ENCODE measurements at regions of chr12 and their contacts with region 1.

Region 1: DNA sequence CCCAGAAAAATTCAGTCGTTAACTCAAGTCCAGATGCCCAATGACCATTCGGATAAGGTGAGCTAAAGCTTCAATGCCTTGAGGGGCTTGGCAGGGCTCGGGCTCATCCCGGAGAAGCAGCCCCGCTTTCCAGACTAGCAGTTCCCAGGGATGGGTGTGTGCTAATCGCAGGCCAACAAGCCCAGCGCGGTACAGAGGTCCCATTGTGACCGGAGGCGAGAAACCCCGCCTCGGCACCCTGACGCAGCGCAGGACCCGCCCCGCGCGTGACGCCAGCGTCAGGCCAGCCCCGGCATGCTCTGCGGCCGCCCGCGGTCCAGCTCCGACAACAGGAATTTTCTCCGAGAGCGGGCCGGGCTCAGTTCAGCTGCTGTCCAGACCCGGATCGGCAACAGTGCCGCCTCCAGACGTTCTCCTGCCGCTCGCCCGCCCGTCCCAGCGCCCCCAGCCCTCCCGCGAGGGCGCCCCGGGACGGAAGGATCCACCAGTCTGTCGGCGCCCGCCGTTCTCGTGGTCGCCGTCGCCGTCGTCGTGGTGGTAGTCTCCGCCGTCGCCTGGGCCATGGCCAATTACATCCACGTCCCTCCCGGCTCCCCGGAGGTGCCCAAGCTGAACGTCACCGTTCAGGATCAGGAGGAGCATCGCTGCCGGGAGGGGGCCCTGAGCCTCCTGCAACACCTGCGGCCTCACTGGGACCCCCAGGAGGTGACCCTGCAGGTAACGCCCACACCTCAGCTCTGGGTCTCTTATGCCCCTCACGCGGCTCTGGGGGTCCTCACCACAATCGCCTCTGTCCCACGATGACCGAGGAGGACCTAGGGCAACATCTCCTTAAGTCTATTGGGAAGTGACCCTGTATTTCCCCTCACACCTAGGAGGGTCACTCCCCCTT is at the start of gene ETNK1:
- DNase-seq: peak; percentile 89
- ATAC-seq: peak; percentile 98
- H3K4me3 Mint-ChIP-seq: peak within 1 kb of the TSS; percentile 100
- H3K27ac Mint-ChIP-seq: peak within 1 kb of the TSS; percentile 94
- H3K4me1 Mint-ChIP-seq: peaks cover 33% of the 10 kb centered on the region
- H3K27me3 Mint-ChIP-seq: peaks cover 4% of the 10 kb centered on the region
- CTCF ChIP-seq: no peak
- total RNA-seq, gene ETNK1: 54.9 to 55.2 TPM

Region 2: DNA sequence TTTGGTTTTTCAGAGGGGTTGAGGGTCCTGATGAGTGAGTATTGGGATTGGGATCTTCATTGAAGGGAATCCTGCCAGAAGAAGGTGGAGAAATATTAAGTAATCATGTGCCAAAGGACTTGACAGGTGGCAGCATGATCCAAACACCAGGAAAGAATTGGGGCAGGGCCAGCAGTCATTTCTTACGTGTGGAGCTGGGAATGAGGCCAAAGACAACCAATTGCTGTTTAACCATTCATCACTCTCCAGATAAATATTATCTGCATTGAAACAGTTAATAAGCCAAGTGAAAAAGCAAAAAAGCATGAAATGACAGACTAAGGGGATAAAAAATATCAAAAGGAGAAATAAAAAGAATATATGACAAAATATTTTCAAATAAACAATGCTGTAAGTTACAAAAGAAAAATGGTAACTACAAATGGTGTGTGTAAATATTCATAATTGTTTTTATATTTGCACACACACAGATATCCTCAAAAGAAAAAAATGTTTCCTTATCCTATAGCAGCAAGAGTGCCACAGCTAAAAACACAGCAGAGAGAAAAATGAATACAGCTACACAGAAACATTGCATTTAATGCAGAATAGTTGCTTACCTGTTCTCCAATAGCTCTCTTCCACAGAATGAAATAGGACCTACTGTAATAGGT is 106.9 kb before region 1 on chr12:
- CTCF ChIA-PET with region 1: no interaction called
- POLR2A ChIA-PET with region 1: no interaction called
- intact Hi-C with region 1: loop called (anchors 2 kb)
- DNase-seq: no peak
- ATAC-seq: no peak
- H3K4me3 Mint-ChIP-seq: no peak overlapping the region
- H3K27ac Mint-ChIP-seq: no peak overlapping the region
- H3K4me1 Mint-ChIP-seq: no peaks in the 10 kb centered on the region
- H3K27me3 Mint-ChIP-seq: no peaks in the 10 kb centered on the region
- CTCF ChIP-seq: no peak

Region 3: DNA sequence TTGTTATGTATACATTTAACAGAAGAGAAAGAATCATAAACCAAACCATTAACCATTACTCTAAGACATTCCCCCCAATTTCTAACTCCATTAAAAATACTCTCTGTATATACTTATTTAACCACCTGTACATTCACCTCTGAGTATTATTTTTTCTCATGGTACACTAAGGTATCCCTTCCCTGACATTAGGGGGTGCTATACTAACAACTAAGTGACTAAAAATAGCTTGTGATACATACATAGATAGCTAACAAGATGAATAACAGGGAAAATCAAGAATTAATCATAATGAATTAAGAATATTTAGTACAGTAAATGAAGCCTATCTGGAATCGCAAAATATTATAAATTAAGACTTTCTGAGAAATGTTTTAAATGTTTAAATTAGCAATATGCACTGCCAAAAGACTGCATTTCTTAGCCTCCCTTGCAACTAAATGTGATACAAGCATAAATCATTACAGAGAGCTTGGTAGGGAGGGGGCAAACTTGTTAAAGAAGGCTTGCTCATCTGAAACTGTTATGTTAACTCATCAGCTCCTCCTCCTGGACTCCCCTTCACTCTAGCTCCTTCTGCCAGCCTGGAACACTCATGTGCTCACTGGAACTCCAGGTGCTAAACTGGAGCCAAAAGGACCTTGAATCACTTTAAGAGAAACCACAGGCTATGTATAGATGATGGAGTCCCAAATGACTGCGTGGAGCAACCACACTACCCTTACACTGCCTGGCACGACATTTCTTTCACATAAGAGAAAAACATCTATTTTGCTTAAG is 95.6 kb before region 1 on chr12:
- CTCF ChIA-PET with region 1: interaction called, 22 read pairs
- POLR2A ChIA-PET with region 1: interaction called, 3 read pairs
- intact Hi-C with region 1: no loop called
- DNase-seq: no peak
- ATAC-seq: peak; percentile 80
- H3K4me3 Mint-ChIP-seq: no peak overlapping the region
- H3K27ac Mint-ChIP-seq: peak overlapping the region; percentile 52
- H3K4me1 Mint-ChIP-seq: peaks cover 19% of the 10 kb centered on the region
- H3K27me3 Mint-ChIP-seq: no peaks in the 10 kb centered on the region
- CTCF ChIP-seq: peak; percentile 70

Region 4: GRCh38 chr12:22544038-22544979 is 80.8 kb before region 1 on chr12 and contains the start of gene C2CD5:
- CTCF ChIA-PET with region 1: interaction called, 8 read pairs
- POLR2A ChIA-PET with region 1: interaction called, 11 read pairs
- intact Hi-C with region 1: loop called (anchors 5 kb)
- DNase-seq: peak; percentile 97
- ATAC-seq: peak; percentile 91
- H3K4me3 Mint-ChIP-seq: peak within 1 kb of the TSS; percentile 95
- H3K27ac Mint-ChIP-seq: peak within 1 kb of the TSS; percentile 94
- H3K4me1 Mint-ChIP-seq: peaks cover 30% of the 10 kb centered on the region
- H3K27me3 Mint-ChIP-seq: peaks cover 6% of the 10 kb centered on the region
- CTCF ChIP-seq: no peak
- total RNA-seq, gene C2CD5: 32.4 to 34.1 TPM